ENCODE measurements at regions of chr6 and their contacts with region 1.

Region 1: DNA sequence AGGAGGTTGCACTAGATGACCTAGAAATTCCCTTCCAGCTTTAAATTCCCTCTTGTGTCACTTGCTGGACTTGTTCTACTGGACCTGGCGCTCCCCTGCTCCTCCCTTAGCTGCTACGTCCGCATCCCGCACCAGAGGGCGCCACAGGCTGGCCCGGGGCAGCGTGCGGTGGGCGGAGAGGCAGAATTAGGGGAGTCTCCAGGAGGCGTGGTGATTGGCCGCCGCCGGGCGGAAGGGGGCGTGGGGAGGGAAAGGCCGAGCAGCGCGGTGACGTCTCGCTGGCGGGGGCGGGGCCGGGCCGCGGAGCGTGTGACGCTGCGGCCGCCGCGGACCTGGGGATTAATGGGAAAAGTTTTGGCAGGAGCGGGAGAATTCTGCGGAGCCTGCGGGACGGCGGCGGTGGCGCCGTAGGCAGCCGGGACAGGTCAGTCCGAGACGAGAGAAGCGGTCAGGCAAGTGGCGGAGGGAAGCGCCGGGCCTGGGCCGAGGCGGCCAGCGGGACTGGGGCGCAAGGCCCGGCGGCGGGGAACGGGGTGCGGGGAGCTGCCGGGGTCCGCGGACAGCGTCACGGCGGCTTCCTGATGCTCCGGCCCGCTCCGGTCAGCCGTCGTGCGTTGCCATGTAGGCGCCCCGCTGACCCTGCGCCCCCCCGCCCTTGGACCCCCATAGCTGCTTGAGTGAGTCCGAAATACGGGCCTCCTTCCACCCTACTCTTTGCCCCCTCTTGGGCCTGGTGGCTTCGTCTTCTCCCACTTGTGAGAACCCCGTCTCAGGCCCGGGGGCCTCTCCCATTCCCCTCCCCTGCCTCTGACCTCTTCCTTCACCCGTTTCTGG is at the start of gene PPARD:
- DNase-seq: peak; percentile 97
- H3K4me3 ChIP-seq: peak within 1 kb of the TSS; percentile 84
- H3K27ac ChIP-seq: peak within 1 kb of the TSS; percentile 79
- H3K4me1 ChIP-seq: peaks cover 3% of the 10 kb centered on the region
- H3K27me3 ChIP-seq: no peaks in the 10 kb centered on the region
- CTCF ChIP-seq: peak; percentile 98
- total RNA-seq, gene PPARD: 13.8 and 15.4 TPM in 2 replicates

Region 2: GRCh38 chr6:35354361-35355135 is 12.1 kb after region 1 on chr6:
- CTCF ChIA-PET with region 1: interaction called, 10 read pairs
- POLR2A ChIA-PET with region 1: interaction called, 5 read pairs
- intact Hi-C with region 1: no loop called
- DNase-seq: no peak
- H3K4me3 ChIP-seq: no peak overlapping the region
- H3K27ac ChIP-seq: no peak overlapping the region
- H3K4me1 ChIP-seq: no peaks in the 10 kb centered on the region
- H3K27me3 ChIP-seq: no peaks in the 10 kb centered on the region
- CTCF ChIP-seq: no peak

Region 3: GRCh38 chr6:35415065-35415991 is 72.9 kb after region 1 on chr6:
- CTCF ChIA-PET with region 1: interaction called, 7 read pairs
- POLR2A ChIA-PET with region 1: no interaction called
- intact Hi-C with region 1: loop called (anchors 1 kb)
- DNase-seq: peak; percentile 74
- H3K4me3 ChIP-seq: no peak overlapping the region
- H3K27ac ChIP-seq: no peak overlapping the region
- H3K4me1 ChIP-seq: peaks cover 4% of the 10 kb centered on the region
- H3K27me3 ChIP-seq: no peaks in the 10 kb centered on the region
- CTCF ChIP-seq: peak; percentile 65

Region 4: DNA sequence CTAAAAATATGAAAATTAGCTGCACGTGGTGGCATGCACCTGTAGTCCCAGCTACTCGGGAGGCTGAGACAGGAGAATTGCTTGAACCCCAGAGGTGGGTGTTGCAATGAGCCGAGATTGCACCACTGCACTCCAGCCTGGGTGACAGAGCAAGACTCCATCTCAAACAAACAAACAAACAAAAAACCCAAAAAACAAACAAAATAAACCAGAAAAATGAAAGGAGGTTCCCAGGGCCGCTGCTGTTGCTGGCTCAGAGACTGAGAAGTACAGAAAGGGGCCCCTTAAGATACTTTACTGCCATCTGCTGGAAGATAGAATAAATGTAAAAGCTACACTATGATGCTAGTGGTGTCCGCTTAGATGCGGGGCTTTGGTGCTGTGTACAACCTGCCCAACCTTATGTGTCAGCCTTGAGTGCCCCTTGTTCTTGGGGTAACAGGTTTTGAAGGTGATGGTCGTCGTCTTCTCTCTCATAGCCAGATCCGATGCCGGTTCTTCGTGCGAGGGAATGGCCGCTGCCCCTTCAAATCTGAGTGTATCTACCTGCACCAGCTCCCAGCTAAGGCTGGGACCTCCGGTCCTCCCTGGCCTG is 106.9 kb after region 1 on chr6:
- CTCF ChIA-PET with region 1: interaction called, 42 read pairs
- POLR2A ChIA-PET with region 1: no interaction called
- intact Hi-C with region 1: loop called (anchors 1 kb)
- DNase-seq: peak; percentile 82
- H3K4me3 ChIP-seq: no peak overlapping the region
- H3K27ac ChIP-seq: no peak overlapping the region
- H3K4me1 ChIP-seq: peaks cover 19% of the 10 kb centered on the region
- H3K27me3 ChIP-seq: no peaks in the 10 kb centered on the region
- CTCF ChIP-seq: peak; percentile 68

Region 5: DNA sequence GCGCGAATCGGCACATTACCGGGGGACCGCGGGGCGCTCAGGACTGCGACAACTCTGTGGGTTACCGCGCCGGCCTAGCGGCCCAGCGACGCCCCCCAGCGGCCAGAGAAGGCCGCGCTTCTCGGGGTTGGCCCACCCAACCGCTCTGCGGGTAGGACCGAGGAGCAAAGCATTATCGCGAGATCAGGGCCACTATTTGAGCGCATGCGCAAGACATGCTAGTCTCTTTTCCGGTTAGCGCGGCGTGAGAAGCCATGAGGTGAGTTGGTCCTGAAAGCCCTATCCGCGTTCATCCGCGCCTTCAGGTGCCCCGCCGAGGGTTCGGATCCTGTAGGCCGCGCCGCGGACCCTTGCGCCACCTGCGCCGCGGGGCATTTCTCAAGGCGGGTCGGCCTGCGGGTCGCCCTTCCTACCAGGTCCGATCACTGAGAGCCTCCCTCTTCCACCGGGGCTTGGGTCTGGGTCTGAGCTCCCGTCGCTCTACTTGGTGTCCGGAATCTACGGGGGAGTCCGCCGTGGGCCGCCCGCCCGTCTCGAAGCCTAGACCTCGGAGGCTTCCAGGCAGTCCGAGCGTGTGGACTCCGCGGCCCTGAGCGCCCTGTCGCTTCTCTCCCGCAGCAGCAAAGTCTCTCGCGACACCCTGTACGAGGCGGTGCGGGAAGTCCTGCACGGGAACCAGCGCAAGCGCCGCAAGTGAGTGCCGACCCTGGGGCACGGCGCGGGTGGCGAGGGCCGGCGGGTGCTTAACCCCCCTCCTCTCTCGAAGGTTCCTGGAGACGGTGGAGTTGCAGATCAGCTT is 125.9 kb after region 1 on chr6 and contains the start of gene RPL10A:
- CTCF ChIA-PET with region 1: interaction called, 3 read pairs
- POLR2A ChIA-PET with region 1: no interaction called
- intact Hi-C with region 1: loop called (anchors 5 kb)
- DNase-seq: peak; percentile 97
- H3K4me3 ChIP-seq: peak within 1 kb of the TSS; percentile 99
- H3K27ac ChIP-seq: peak within 1 kb of the TSS; percentile 99
- H3K4me1 ChIP-seq: peaks cover 17% of the 10 kb centered on the region
- H3K27me3 ChIP-seq: no peaks in the 10 kb centered on the region
- CTCF ChIP-seq: peak; percentile 99
- total RNA-seq, gene RPL10A: 1,064 and 1,085 TPM in 2 replicates

Measured in A673 (cell line).